Endothelial cell of umbilical vein (primary cell): ENCODE measurements at regions of chr2 and their contacts with region 1.

Region 1: DNA sequence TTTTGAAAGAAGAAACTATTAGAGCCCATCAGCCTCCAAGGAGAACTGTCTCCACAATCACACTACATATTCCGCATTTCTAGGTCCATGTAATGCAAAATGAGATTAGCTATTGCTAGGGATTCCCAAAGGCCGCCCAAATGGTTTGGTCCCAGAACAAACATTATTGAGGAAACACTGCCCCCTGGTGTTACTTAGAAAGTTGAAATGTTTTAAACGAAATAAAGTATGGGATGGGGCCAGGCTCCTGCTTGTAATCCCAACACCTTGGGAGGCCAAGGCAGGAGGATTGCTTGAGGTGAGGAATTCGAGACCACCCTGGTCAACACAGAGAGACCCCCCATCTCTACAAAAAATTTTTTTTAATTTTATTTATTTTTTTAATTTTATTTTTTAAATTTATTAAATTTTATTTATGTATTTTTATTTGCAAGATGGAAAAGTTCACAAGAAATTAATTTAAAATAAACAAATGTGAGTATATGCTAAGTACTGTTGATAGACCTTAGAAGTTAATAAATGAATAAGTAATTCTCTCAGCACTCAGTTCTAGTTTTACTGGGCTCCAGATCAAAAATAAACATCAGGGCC is 5.5 kb downstream of the NHEJ1 start:
- DNase-seq: peak; percentile 61
- H3K4me3 ChIP-seq: no peak overlapping the region
- H3K27ac ChIP-seq: no peak overlapping the region
- H3K4me1 ChIP-seq: peaks cover 6% of the 10 kb centered on the region
- H3K27me3 ChIP-seq: no peaks in the 10 kb centered on the region
- CTCF ChIP-seq: peak; percentile 28 to 36
- POLR2A ChIP-seq: no peak

Region 2: DNA sequence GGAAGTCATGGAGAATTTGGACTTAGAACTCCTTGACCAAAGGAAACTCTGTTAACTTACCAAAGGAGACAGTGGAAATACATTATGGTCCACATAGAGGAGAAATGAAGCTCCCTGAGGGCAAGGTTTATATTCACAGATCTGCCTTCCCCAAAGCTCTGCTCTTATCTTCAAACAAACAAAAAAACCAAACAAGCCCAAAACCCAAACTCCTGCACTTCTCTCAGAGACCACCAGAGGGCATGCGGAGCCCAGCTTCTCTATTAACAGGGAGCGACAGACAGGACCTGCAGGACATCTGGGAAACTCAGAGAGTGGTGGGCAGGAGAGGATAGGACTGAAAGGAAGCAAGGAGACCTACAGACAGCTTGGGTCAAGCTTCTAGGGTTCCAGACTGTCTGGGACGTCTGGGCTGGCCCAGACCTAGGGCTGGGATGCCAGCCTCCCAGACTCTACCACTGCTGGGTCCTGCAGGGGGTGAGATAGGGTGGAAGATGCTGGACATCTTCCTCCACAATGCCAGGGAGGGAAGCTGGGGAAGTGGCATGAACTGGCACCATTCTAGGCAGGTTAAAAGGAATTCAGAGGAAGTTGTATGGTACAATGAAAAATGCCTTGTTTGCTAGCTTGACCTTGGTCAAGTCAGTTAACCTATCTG is 278.5 kb before region 1 on chr2:
- CTCF ChIA-PET with region 1: interaction called, 34 read pairs
- POLR2A ChIA-PET with region 1: no interaction called
- dilution Hi-C with region 1: no loop called
- intact Hi-C with region 1: loop called (anchors 10 kb)
- DNase-seq: peak; percentile 74
- H3K4me3 ChIP-seq: no peak overlapping the region
- H3K27ac ChIP-seq: no peak overlapping the region
- H3K4me1 ChIP-seq: no peaks in the 10 kb centered on the region
- H3K27me3 ChIP-seq: peaks cover 76 to 86% of the 10 kb centered on the region in 2 experiments
- CTCF ChIP-seq: peak; percentile 89 to 90
- POLR2A ChIP-seq: no peak

Region 3: DNA sequence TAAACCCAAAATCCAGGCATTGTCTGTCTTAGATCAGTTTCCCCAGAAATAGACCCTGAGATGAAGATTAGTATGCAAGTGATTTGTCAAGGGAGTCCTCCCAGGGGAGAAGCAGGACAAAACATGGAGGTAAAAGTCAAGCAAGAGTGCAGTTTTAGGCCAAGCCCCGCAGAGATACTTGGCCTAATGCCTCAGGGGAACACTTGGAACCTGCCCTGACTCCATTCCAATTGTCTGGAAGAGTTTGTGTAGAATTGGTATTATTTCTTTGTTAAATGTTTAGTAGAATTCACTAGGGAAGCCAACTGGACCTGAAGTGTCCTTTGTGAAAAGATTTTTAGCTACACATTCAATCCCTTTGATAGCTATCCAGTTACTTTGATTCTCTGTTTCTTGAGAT is 240.1 kb before region 1 on chr2:
- CTCF ChIA-PET with region 1: no interaction called
- POLR2A ChIA-PET with region 1: no interaction called
- dilution Hi-C with region 1: no loop called
- intact Hi-C with region 1: no loop called
- DNase-seq: no peak
- H3K4me3 ChIP-seq: no peak overlapping the region
- H3K27ac ChIP-seq: no peak overlapping the region
- H3K4me1 ChIP-seq: no peaks in the 10 kb centered on the region
- H3K27me3 ChIP-seq: peaks cover 9 to 20% of the 10 kb centered on the region in 2 experiments
- CTCF ChIP-seq: no peak
- POLR2A ChIP-seq: no peak

Region 4: GRCh38 chr2:219010162-219010756 is 144.9 kb before region 1 on chr2:
- CTCF ChIA-PET with region 1: interaction called, 17 read pairs
- POLR2A ChIA-PET with region 1: no interaction called
- dilution Hi-C with region 1: no loop called
- intact Hi-C with region 1: no loop called
- DNase-seq: no peak
- H3K4me3 ChIP-seq: no peak overlapping the region
- H3K27ac ChIP-seq: no peak overlapping the region
- H3K4me1 ChIP-seq: no peaks in the 10 kb centered on the region
- H3K27me3 ChIP-seq: peaks cover 0 to 2% of the 10 kb centered on the region in 2 experiments
- CTCF ChIP-seq: peak in 1 of 2 donors; percentile 26
- POLR2A ChIP-seq: no peak

Region 5: DNA sequence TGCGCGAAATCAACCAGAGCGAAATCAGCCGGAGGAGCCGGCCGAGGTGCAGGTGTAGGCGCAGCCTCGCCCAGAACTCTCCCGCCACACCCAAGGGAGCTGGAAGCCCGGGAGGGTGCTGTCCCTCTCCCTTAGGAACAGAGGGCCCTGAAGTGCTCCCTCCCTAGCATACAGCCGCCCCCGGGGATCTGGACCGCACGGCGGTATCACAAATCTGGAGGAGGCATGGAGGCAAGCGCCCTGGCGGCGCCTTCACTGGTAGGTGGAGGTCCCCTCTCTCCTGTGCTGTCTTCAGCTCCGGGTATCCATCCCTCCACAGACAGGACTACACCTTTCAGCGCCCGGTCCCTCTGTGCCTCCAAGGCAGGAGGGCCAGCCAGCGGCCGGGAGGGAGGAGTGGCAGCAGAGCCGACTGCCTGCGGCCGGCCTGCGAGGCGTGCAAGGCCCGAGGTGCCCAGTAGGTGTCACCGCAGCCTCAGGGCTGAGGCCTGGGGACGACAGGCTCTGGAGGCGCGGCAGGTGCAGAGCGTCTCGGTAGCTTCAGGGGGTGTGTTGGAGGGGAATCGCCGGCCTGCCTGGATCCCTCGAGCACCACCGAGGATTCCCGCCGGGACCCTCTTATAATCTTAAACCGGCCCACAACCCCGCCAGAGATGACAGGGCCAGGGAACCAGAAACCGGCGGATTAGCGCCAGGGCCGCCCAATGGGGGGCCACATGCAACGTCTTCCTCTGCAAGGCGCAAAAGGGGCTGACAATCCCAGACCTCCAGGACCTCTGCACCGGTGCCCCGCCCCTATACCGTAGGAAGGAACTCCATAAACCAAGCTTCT is 97.2 kb before region 1 on chr2:
- CTCF ChIA-PET with region 1: interaction called, 148 read pairs
- POLR2A ChIA-PET with region 1: no interaction called
- dilution Hi-C with region 1: no loop called
- intact Hi-C with region 1: loop called (anchors 1 kb)
- DNase-seq: peak; percentile 60
- H3K4me3 ChIP-seq: no peak overlapping the region
- H3K27ac ChIP-seq: no peak overlapping the region
- H3K4me1 ChIP-seq: no peaks in the 10 kb centered on the region
- H3K27me3 ChIP-seq: peaks cover 52 to 66% of the 10 kb centered on the region in 2 experiments
- CTCF ChIP-seq: peak; percentile 85 to 94
- POLR2A ChIP-seq: no peak

Region 6: DNA sequence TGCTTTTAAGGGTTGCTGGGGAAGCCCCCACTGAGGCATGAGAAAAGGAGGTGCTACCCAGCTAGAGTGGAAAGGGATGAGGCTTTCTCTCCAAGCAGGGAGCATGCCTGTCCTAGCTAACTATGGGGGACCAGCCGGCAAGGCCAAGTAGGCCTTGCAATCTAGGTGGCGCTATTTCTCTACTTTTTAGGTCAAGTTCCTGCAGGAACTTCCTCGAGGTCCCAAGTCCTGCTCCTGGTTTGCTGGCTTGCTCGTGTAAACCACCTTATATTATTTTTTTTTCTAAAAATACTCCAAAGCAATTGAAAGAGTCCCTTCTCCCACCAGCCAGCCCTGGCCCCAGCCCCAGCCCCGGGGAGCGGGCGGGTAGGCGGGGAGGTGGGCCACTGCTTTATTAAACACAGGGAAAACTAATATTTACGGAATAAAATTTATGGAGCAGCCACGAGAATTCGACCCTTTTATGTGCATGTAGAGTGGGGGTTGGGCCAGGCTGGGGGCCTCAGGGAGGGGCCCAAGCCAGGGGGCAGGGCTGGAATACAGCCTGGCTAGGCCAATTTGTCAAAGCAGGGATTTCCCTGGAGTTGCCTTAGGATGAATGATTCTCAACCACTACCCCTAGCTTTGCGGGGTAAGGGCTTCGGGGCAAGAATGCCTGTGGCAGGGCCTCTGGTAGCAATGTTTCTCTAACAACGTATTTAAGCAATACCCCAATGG is 81.6 kb before region 1 on chr2:
- CTCF ChIA-PET with region 1: interaction called, 71 read pairs
- POLR2A ChIA-PET with region 1: no interaction called
- dilution Hi-C with region 1: no loop called
- intact Hi-C with region 1: no loop called
- DNase-seq: peak; percentile 23
- H3K4me3 ChIP-seq: no peak overlapping the region
- H3K27ac ChIP-seq: no peak overlapping the region
- H3K4me1 ChIP-seq: no peaks in the 10 kb centered on the region
- H3K27me3 ChIP-seq: no peaks in the 10 kb centered on the region
- CTCF ChIP-seq: peak; percentile 60 to 65
- POLR2A ChIP-seq: no peak

Region 7: DNA sequence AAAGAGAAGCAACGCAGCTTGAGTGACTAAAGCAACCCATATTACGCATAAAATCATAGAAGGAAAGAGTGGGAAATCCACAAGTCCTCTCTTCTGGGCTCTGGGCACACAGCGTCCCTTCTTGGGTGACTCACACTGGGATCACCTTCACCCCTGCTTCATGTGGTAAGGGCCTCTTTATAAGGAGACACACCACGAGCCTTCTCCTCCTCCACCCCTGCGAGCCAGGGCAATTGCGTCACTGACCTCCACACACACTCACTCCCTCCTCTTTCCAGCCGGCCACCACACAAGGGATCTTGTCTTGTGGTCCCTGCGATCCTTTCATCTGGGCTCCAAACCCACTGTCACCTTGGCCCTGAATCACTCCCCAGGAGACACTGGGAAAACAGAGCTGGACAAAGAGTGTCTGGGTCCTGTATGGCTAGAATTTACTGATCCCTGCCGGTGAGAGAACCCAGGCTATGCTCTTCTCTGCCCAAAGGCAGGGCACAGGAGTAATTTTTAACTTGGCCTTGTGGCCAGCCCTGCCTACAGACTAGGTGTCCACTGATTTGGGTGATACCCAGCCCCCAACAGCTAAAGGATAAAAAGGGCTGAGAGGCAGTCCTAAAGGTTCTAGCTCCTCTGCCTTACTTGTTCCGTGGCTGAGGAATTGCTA is 29.8 kb before region 1 on chr2:
- CTCF ChIA-PET with region 1: interaction called, 42 read pairs
- POLR2A ChIA-PET with region 1: no interaction called
- dilution Hi-C with region 1: no loop called
- intact Hi-C with region 1: no loop called
- DNase-seq: no peak
- H3K4me3 ChIP-seq: no peak overlapping the region
- H3K27ac ChIP-seq: no peak overlapping the region
- H3K4me1 ChIP-seq: no peaks in the 10 kb centered on the region
- H3K27me3 ChIP-seq: no peaks in the 10 kb centered on the region
- CTCF ChIP-seq: no peak
- POLR2A ChIP-seq: no peak

Region 8: GRCh38 chr2:219261024-219261855 is 106.1 kb after region 1 on chr2:
- CTCF ChIA-PET with region 1: no interaction called
- POLR2A ChIA-PET with region 1: no interaction called
- dilution Hi-C with region 1: no loop called
- intact Hi-C with region 1: no loop called
- DNase-seq: no peak
- H3K4me3 ChIP-seq: no peak overlapping the region
- H3K27ac ChIP-seq: no peak overlapping the region
- H3K4me1 ChIP-seq: no peaks in the 10 kb centered on the region
- H3K27me3 ChIP-seq: peaks cover 18 to 19% of the 10 kb centered on the region in 2 experiments
- CTCF ChIP-seq: no peak
- POLR2A ChIP-seq: no peak